Adrenal gland (tissue), 19 donors: ENCODE measurements at regions of chr1 and their contacts with region 1.

Region 1: DNA sequence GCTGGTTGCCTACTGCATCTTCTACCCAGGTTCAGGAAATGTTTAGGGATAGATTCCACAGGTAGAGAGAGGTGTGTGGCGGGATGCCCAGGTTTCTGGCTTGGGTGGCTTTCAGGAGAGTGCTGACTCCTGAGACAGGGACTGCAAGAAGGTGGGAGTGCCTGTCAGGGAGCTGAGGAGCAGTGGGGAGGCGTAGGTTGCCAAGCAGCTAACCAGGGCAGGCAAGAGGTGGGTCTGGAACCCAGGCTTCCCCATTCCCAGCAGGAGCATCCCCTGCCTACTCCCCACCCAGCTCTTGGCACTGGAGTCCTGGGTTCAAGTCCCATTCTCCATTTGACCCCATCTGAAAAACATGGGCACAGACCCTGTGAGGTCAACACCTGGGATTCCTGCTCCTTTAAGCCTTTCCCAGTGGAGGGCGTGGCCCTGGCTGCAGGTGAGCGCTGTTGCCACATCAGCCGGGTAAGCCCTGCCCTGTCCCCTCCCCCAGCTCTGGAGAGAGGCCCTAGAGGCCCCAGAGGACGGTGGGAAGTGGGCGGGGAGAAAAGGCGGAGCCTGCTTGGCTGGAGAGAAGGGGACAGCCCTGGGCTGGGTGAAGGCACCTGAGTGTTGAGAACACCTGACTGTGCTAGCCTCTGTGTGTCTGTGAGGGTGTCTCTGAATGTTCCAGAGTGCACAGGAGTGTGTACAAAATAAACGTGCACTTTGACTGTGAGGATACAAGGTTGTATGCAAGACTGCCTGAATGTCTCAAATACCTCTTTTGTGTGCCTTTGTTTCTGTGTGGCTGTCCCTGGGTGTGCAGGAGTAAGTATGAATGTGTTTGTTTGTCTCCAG is 14.0 kb upstream of the SYNC start:
- DNase-seq: peak; percentile 76 to 93 (median 86)
- H3K4me3 ChIP-seq: no peak overlapping the region
- H3K27ac ChIP-seq: peak overlapping the region in 1 of 5 donors; percentile 22
- H3K4me1 ChIP-seq: peaks cover 7 to 10% of the 10 kb centered on the region in 2 donors
- H3K27me3 ChIP-seq: no peaks in the 10 kb centered on the region
- CTCF ChIP-seq: no peak
- POLR2A ChIP-seq: peak in 1 of 2 donors; percentile 19

Region 2: GRCh38 chr1:32773018-32773763 is 56.7 kb after region 1 on chr1:
- intact Hi-C with region 1: loop called (anchors 5 kb)
- DNase-seq: peak; percentile 84 to 95 (median 92)
- H3K4me3 ChIP-seq: no peak overlapping the region
- H3K27ac ChIP-seq: peak overlapping the region in 4 of 5 donors; percentile 26 to 84 (median 70)
- H3K4me1 ChIP-seq: peaks cover 29 to 53% of the 10 kb centered on the region in 2 donors
- H3K27me3 ChIP-seq: no peaks in the 10 kb centered on the region
- CTCF ChIP-seq: peak; percentile 93 to 96 (median 94)
- POLR2A ChIP-seq: peak in 1 of 2 donors; percentile 40

Region 3: DNA sequence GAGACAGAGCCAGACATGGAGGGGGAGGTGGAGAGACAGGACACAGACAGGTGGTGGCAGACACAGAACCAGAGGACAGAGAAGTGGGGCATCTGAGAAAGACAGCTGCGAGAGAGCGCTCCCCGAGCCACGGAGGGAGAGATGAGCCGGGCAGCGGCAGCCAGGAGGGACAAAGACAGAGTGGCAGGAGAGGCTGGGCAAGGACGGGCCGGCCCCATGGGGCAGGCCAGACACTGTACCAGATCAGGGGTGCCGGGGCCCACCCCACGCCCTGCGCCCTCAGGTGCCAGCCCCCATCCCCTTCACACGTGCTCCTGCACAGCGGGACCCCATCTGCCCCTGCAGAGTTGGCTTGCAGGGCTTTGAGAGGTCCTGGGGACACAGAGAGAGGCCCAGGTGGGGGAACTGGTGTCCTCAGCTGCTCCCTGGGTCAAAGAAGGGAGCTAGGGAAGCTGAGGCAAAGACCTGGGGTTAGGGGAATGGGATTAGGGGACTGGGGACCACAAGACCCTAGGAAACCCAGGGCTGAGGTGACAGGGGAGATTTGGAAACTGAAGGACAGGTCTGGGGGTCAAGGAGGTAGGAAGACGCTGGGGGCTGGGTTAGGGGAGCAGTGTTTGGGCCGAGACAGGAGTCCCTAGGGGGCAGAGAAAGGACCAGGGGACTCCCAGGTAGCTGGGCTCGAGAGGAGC is 153.5 kb after region 1 on chr1:
- intact Hi-C with region 1: loop called (anchors 10 kb)
- DNase-seq: peak in 1 of 7 donors; percentile 58
- H3K4me3 ChIP-seq: peak overlapping the region in 1 of 4 donors; percentile 62
- H3K27ac ChIP-seq: peak overlapping the region in 1 of 5 donors; percentile 21
- H3K4me1 ChIP-seq: peaks cover 12 to 26% of the 10 kb centered on the region in 2 donors
- H3K27me3 ChIP-seq: no peaks in the 10 kb centered on the region
- CTCF ChIP-seq: no peak
- POLR2A ChIP-seq: no peak

Region 4: GRCh38 chr1:32876341-32877210 is 160.0 kb after region 1 on chr1:
- intact Hi-C with region 1: loop called in 1 of 2 experiments (anchors 10 kb)
- DNase-seq: peak; percentile 51 to 85 (median 72)
- H3K4me3 ChIP-seq: no peak overlapping the region
- H3K27ac ChIP-seq: no peak overlapping the region
- H3K4me1 ChIP-seq: peaks cover 0 to 9% of the 10 kb centered on the region in 2 donors
- H3K27me3 ChIP-seq: no peaks in the 10 kb centered on the region
- CTCF ChIP-seq: peak; percentile 77 to 91 (median 85)
- POLR2A ChIP-seq: no peak

Region 5: DNA sequence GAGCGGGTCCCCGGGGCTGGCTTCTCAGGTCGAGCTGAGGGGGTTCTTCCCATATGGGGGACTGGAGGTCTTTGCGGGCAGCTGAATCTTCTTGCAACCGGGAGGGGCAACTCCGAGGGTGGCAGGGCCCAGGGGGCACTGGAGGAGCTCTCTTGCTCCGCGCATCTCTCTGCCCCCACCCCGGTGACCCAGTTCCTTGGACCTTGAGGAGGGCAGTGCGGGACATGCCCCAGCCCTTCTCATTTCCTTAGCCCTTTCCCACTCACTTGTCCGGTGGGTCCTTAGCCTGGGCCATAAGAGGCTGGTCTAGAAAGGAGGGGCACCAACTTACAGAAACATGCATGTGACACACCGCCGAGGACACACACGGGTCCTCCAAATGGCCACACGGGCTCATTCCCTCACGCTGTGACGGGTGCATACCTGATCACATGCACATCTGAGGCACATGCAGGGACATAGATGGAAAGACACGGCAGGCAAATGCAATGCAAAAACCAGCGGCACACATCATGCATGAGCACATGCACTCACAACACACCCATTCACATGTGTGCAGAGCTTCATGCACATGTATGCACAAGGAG is 170.4 kb after region 1 on chr1:
- intact Hi-C with region 1: no loop called
- DNase-seq: no peak
- H3K4me3 ChIP-seq: no peak overlapping the region
- H3K27ac ChIP-seq: no peak overlapping the region
- H3K4me1 ChIP-seq: peaks cover 0 to 8% of the 10 kb centered on the region in 2 donors
- H3K27me3 ChIP-seq: peaks cover 24% of the 10 kb centered on the region
- CTCF ChIP-seq: no peak
- POLR2A ChIP-seq: no peak